Activated naive CD8-positive, alpha-beta T cell treated with anti-CD3 and anti-CD28 coated beads, Interleukin-2, amount 10 ng/mL, durations not matched to agents 7 days and 5 days (primary cell): ENCODE measurements at regions of chr15 and their contacts with region 1.

Region 1: DNA sequence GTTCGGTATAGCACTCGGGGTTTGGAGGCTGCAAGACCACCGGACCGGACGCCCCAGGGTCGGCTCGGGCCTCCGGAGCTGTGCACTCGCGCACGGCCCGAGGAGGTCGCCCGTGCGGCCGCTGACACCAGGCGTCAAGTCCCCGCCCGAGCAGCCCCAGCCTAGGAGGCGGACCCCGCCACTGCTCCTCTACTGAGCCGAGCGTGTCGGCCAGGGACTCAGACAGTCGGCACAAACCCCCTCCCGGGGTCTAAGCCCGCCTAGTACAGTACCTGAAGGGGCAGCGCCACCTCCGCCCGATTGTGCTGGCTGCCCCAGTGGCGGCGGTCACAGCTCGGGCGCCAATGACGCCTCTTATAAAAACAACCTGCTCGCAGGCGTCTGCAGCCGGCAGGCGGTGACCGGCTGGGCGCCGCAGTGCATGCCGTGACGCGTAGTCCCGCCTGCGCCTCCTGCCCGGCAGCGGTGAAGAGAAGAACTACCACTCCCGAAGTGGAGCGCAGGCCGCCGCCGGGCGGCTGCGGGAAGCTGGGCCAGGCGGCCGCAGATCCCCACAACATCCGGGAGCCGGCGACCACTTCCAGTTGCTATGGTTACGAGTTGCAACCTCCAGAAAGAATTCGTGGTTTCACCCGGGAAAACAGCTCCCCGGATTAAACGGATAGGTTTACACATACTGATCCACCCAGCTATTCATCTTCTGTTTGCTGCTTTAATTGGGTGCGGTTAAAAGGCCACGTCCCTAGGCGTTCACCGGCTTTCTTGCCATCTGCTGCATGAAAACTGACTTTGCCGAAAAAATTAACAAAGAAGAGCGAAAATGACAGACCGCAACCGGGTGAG is at the starts of genes CCPG1 and PIERCE2:
- DNase-seq: peak; percentile 90
- ATAC-seq: peak; percentile 96
- H3K4me3 Mint-ChIP-seq: peak within 1 kb of the TSS; percentile 85
- H3K27ac Mint-ChIP-seq: peak within 1 kb of the TSS; percentile 85
- H3K4me1 Mint-ChIP-seq: peaks cover 19% of the 10 kb centered on the region
- H3K27me3 Mint-ChIP-seq: peaks cover 3% of the 10 kb centered on the region
- total RNA-seq, gene CCPG1: 16.0 to 18.8 TPM
- total RNA-seq, gene PIERCE2: not detected

Region 2: GRCh38 chr15:55196458-55197361 is 211.5 kb before region 1 on chr15 and contains the start of gene RSL24D1:
- POLR2A ChIA-PET with region 1: interaction called, 10 read pairs
- DNase-seq: peak; percentile 88
- ATAC-seq: peak; percentile 98
- H3K4me3 Mint-ChIP-seq: no peak within 1 kb of the TSS
- H3K27ac Mint-ChIP-seq: no peak within 1 kb of the TSS
- H3K4me1 Mint-ChIP-seq: peaks cover 12% of the 10 kb centered on the region
- H3K27me3 Mint-ChIP-seq: no peaks in the 10 kb centered on the region
- total RNA-seq, gene RSL24D1: 90.8 to 96.0 TPM

Region 3: DNA sequence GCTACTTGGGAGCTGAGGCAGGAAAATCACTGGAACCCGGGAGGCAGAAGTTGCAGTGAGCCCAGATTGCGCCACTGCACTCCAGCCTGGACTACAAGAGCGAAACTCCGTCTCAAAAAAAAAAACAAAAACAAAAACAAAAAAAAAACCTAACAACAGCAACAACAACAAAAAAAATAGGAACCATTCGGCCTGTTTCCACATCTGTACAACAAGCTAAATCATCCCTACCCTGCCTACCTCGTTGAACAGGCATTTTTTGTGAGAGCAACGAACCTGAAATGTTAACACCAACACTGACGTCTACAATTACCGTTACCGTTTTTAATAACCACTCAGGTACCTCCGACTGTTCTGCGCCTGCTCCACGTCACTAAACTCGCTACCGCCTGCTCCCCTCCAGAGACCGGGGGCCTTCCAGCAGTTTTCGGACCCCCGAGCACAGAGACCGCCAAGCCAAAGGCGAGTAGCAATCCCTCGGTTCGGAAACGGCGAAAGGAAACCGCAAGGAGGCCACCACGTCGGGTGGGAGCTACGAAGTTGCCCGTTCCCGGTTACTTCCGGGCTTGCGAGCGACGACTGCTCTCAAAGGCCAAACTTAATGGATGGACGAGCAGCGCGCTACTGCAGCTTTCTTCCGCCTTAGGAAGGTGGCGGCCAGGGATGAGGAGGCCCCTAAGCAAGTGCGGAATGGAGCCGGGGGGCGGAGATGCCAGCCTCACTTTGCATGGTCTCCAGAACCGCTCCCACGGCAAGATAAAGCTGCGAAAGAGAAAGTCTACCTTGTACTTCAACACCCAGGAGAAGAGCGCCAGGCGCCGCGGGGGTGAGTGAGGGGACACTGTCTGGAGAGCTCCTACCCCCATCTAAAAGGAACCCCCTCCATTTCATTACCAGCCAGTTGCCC is 89.3 kb before region 1 on chr15 and contains the starts of genes PIGB and PIGBOS1:
- POLR2A ChIA-PET with region 1: interaction called, 20 read pairs
- DNase-seq: peak; percentile 83
- ATAC-seq: peak; percentile 88
- H3K4me3 Mint-ChIP-seq: peak within 1 kb of the TSS; percentile 99
- H3K27ac Mint-ChIP-seq: peak within 1 kb of the TSS; percentile 97
- H3K4me1 Mint-ChIP-seq: peaks cover 40% of the 10 kb centered on the region
- H3K27me3 Mint-ChIP-seq: no peaks in the 10 kb centered on the region
- total RNA-seq, gene PIGB: 17.6 to 26.1 TPM
- total RNA-seq, gene PIGBOS1: 10.3 to 13.8 TPM

Region 4: DNA sequence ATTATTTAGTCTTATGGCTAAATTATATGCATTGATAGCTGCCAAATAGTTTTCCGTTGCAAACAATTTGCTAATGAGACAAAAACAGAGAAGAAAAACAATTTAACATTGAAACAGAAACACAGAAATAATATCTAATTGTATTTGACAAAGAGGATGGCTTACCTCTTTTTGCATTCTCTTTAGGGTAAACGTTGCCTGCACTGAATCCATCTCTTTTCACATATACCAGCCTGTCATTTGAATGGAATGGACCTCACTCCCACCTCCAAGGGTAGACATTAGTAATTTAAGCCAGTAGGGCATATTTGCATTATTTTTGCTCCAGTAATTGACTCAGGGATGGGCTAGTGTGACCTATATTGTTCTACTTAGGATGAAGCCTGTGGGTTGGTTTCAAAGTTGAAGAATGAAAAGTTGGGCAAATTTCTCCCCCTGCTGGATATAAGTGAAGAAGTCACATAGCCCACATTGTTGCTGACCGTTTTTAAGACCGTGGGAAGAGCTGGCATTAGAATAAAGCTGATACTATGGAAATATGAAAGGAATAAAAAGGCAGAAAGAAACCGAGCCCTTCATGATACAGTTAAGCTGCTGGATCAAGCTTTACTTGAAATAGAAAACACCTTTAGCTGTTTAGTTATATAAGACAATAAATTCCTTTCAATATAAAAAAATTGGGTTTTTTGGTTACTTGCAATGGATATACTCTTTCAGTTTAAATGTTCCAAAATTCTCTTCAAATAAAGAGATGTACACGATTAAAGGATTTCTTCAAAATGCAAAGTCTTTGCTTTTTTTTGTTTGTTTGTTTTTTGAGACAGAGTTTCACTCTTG is 27.0 kb after region 1 on chr15:
- POLR2A ChIA-PET with region 1: no interaction called
- DNase-seq: no peak
- ATAC-seq: peak; percentile 54
- H3K4me3 Mint-ChIP-seq: no peak overlapping the region
- H3K27ac Mint-ChIP-seq: no peak overlapping the region
- H3K4me1 Mint-ChIP-seq: peaks cover 5% of the 10 kb centered on the region
- H3K27me3 Mint-ChIP-seq: no peaks in the 10 kb centered on the region